CD8-positive, alpha-beta memory T cell (primary cell): ENCODE measurements at regions of chr12 and their contacts with region 1.

Region 1: DNA sequence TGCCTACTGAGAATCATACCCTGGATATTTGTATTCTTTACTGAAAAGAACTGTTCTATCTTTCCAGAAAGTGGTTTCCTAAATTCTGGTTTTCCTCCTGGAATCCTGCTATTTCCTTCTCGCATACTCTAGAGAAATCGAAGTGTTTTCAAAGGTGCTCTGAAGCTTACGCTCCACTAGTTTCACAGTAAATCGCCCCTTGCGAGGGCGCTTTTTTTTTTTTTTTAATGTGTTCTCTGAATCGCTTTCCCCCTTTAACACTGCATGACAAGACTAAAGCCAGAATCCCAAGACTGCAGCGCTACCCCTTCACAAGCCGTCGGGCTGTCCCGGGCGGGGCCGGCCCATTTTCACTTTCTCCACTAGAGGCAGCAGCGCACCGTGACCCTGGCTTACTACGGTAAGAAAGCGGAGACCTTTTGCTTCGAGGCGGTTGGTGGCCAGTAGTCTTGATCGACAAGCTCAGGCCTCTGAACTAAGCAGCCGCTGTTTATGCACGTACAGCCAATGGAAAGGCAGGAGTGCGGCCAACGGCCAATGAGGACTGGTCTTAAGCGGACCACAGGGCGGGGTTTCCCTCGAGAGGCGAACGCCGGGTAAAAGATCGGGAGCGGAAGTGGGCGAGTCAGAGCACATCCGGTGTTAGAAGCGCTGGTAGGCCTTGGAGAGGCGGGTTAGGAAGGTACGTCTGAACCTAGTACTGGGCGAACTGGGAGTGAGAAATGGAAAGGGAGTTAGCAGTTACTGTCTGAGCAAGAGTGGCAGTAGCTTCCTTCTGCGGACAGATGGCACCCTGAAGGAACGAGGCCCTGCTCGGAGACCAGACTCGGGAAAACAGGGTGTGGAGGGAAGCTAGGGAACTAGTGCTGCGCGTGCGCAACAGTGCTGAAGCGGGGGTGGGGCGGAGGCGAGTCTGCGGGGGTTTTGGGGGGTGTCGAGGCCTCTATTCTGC is at the start of gene TMBIM6:
- DNase-seq: peak; percentile 97 to 100 (median 99)
- H3K4me3 ChIP-seq: peak within 1 kb of the TSS; percentile 88
- H3K4me3 Mint-ChIP-seq: peak within 1 kb of the TSS; percentile 91 to 100 (median 94)
- H3K27ac ChIP-seq: peak within 1 kb of the TSS; percentile 99
- H3K27ac Mint-ChIP-seq: peak within 1 kb of the TSS; percentile 94 to 100 (median 99)
- H3K4me1 ChIP-seq: peaks cover 43% of the 10 kb centered on the region
- H3K4me1 Mint-ChIP-seq: peaks cover 44 to 51% (median 48%) of the 10 kb centered on the region in 3 donors
- H3K27me3 ChIP-seq: no peaks in the 10 kb centered on the region
- H3K27me3 Mint-ChIP-seq: peaks cover 0 to 4% of the 10 kb centered on the region in 2 donors
- total RNA-seq, gene TMBIM6: 443 to 449 TPM

Region 2: GRCh38 chr12:49462083-49462744 is 279.0 kb before region 1 on chr12:
- CTCF ChIA-PET with region 1: no interaction called
- POLR2A ChIA-PET with region 1: no interaction called
- DNase-seq: no peak
- H3K4me3 ChIP-seq: no peak overlapping the region
- H3K4me3 Mint-ChIP-seq: no peak overlapping the region
- H3K27ac ChIP-seq: no peak overlapping the region
- H3K27ac Mint-ChIP-seq: no peak overlapping the region
- H3K4me1 ChIP-seq: no peaks in the 10 kb centered on the region
- H3K4me1 Mint-ChIP-seq: no peaks in the 10 kb centered on the region
- H3K27me3 ChIP-seq: no peaks in the 10 kb centered on the region
- H3K27me3 Mint-ChIP-seq: peaks cover 0 to 1% of the 10 kb centered on the region in 2 donors

Region 3: GRCh38 chr12:49644620-49644994 is 96.6 kb before region 1 on chr12:
- CTCF ChIA-PET with region 1: interaction called, 15 read pairs
- POLR2A ChIA-PET with region 1: no interaction called
- DNase-seq: peak; percentile 76 to 89 (median 77)
- H3K4me3 ChIP-seq: no peak overlapping the region
- H3K4me3 Mint-ChIP-seq: peak overlapping the region in 2 of 7 donors; percentile 20 to 23
- H3K27ac ChIP-seq: no peak overlapping the region
- H3K27ac Mint-ChIP-seq: peak overlapping the region; percentile 44 to 98 (median 89)
- H3K4me1 ChIP-seq: peaks cover 17% of the 10 kb centered on the region
- H3K4me1 Mint-ChIP-seq: peaks cover 18 to 31% (median 23%) of the 10 kb centered on the region in 3 donors
- H3K27me3 ChIP-seq: no peaks in the 10 kb centered on the region
- H3K27me3 Mint-ChIP-seq: no peaks in the 10 kb centered on the region

Region 4: GRCh38 chr12:49693994-49694393 is 47.2 kb before region 1 on chr12:
- CTCF ChIA-PET with region 1: no interaction called
- POLR2A ChIA-PET with region 1: no interaction called
- DNase-seq: no peak
- H3K4me3 ChIP-seq: no peak overlapping the region
- H3K4me3 Mint-ChIP-seq: no peak overlapping the region
- H3K27ac ChIP-seq: no peak overlapping the region
- H3K27ac Mint-ChIP-seq: no peak overlapping the region
- H3K4me1 ChIP-seq: peaks cover 43% of the 10 kb centered on the region
- H3K4me1 Mint-ChIP-seq: peaks cover 19 to 49% (median 30%) of the 10 kb centered on the region in 3 donors
- H3K27me3 ChIP-seq: no peaks in the 10 kb centered on the region
- H3K27me3 Mint-ChIP-seq: no peaks in the 10 kb centered on the region

Region 5: GRCh38 chr12:49763006-49763591 is 21.9 kb after region 1 on chr12:
- CTCF ChIA-PET with region 1: interaction called, 34 read pairs
- POLR2A ChIA-PET with region 1: interaction called, 27 read pairs
- DNase-seq: peak; percentile 64 to 81 (median 73)
- H3K4me3 ChIP-seq: no peak overlapping the region
- H3K4me3 Mint-ChIP-seq: peak overlapping the region in 6 of 7 donors; percentile 45 to 58 (median 50)
- H3K27ac ChIP-seq: no peak overlapping the region
- H3K27ac Mint-ChIP-seq: peak overlapping the region; percentile 78 to 93 (median 89)
- H3K4me1 ChIP-seq: peaks cover 37% of the 10 kb centered on the region
- H3K4me1 Mint-ChIP-seq: peaks cover 47 to 59% (median 57%) of the 10 kb centered on the region in 3 donors
- H3K27me3 ChIP-seq: no peaks in the 10 kb centered on the region
- H3K27me3 Mint-ChIP-seq: no peaks in the 10 kb centered on the region

Region 6: GRCh38 chr12:49796606-49797448 is 55.6 kb after region 1 on chr12:
- CTCF ChIA-PET with region 1: interaction called, 10 read pairs
- POLR2A ChIA-PET with region 1: no interaction called
- DNase-seq: no peak
- H3K4me3 ChIP-seq: no peak overlapping the region
- H3K4me3 Mint-ChIP-seq: no peak overlapping the region
- H3K27ac ChIP-seq: no peak overlapping the region
- H3K27ac Mint-ChIP-seq: no peak overlapping the region
- H3K4me1 ChIP-seq: no peaks in the 10 kb centered on the region
- H3K4me1 Mint-ChIP-seq: no peaks in the 10 kb centered on the region
- H3K27me3 ChIP-seq: no peaks in the 10 kb centered on the region
- H3K27me3 Mint-ChIP-seq: no peaks in the 10 kb centered on the region

Region 7: GRCh38 chr12:49842519-49843352 is 101.5 kb after region 1 on chr12 and contains the start of gene BCDIN3D:
- CTCF ChIA-PET with region 1: interaction called, 25 read pairs
- POLR2A ChIA-PET with region 1: interaction called, 5 read pairs
- DNase-seq: peak; percentile 88 to 94 (median 89)
- H3K4me3 ChIP-seq: peak within 1 kb of the TSS; percentile 96
- H3K4me3 Mint-ChIP-seq: peak within 1 kb of the TSS; percentile 90 to 97 (median 93)
- H3K27ac ChIP-seq: peak within 1 kb of the TSS; percentile 79
- H3K27ac Mint-ChIP-seq: peak within 1 kb of the TSS; percentile 89 to 97 (median 96)
- H3K4me1 ChIP-seq: peaks cover 33% of the 10 kb centered on the region
- H3K4me1 Mint-ChIP-seq: peaks cover 29 to 51% (median 44%) of the 10 kb centered on the region in 3 donors
- H3K27me3 ChIP-seq: no peaks in the 10 kb centered on the region
- H3K27me3 Mint-ChIP-seq: no peaks in the 10 kb centered on the region
- total RNA-seq, gene BCDIN3D: 6.5 to 7.6 TPM

Region 8: GRCh38 chr12:49922349-49923034 is 181.3 kb after region 1 on chr12:
- CTCF ChIA-PET with region 1: no interaction called
- POLR2A ChIA-PET with region 1: no interaction called
- DNase-seq: no peak
- H3K4me3 ChIP-seq: no peak overlapping the region
- H3K4me3 Mint-ChIP-seq: no peak overlapping the region
- H3K27ac ChIP-seq: no peak overlapping the region
- H3K27ac Mint-ChIP-seq: peak overlapping the region in 1 of 8 donors; percentile 61
- H3K4me1 ChIP-seq: no peaks in the 10 kb centered on the region
- H3K4me1 Mint-ChIP-seq: no peaks in the 10 kb centered on the region
- H3K27me3 ChIP-seq: no peaks in the 10 kb centered on the region
- H3K27me3 Mint-ChIP-seq: peaks cover 2 to 5% of the 10 kb centered on the region in 2 donors